HepG2 (cell line): ENCODE measurements at regions of chr17 and their contacts with region 1.

Region 1: DNA sequence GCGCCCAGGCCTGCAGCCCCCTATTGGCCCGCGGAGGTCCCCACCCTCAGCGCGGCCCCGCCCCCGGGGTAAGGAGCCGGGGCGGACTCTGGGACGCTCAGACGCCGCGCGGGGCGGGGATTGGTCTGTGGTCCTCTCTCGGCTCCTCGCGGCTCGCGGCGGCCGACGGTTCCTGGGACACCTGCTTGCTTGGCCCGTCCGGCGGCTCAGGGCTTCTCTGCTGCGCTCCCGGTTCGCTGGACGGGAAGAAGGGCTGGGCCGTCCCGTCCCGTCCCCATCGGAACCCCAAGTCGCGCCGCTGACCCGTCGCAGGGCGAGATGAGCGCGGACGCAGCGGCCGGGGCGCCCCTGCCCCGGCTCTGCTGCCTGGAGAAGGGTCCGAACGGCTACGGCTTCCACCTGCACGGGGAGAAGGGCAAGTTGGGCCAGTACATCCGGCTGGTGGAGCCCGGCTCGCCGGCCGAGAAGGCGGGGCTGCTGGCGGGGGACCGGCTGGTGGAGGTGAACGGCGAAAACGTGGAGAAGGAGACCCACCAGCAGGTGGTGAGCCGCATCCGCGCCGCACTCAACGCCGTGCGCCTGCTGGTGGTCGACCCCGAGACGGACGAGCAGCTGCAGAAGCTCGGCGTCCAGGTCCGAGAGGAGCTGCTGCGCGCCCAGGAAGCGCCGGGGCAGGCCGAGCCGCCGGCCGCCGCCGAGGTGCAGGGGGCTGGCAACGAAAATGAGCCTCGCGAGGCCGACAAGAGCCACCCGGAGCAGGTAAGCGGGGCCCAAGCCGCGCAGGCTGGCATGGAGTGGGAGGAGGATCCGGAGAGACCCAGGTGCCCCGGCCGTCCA is at the start of gene NHERF1:
- DNase-seq: peak; percentile 88
- ATAC-seq: peak; percentile 65
- H3K4me3 ChIP-seq: peak within 1 kb of the TSS; percentile 95 to 99 (median 99)
- H3K27ac ChIP-seq: peak within 1 kb of the TSS; percentile 96
- H3K4me1 ChIP-seq: peaks cover 70% of the 10 kb centered on the region
- H3K27me3 ChIP-seq: no peaks in the 10 kb centered on the region; a peak in 1 of 5 replicates
- CTCF ChIP-seq: peak; percentile 57
- EP300 ChIP-seq: 0 out of 4 replicates have a peak, but pooled peaks of 1 of the 2 experiments have one; percentile 22
- POLR2A ChIP-seq: peak; percentile 99 to 100
- RAD21 ChIP-seq: peak; percentile 68
- total RNA-seq, gene NHERF1: 138 and 169 TPM in 2 replicates

Region 2: GRCh38 chr17:74659898-74660297 is 88.8 kb before region 1 on chr17:
- CTCF ChIA-PET with region 1: interaction called, 12 read pairs
- POLR2A ChIA-PET with region 1: interaction called, 7 read pairs
- in situ Hi-C with region 1: no loop called
- intact Hi-C with region 1: no loop called
- DNase-seq: no peak
- ATAC-seq: no peak
- H3K4me3 ChIP-seq: no peak overlapping the region
- H3K27ac ChIP-seq: no peak overlapping the region
- H3K4me1 ChIP-seq: no peaks in the 10 kb centered on the region
- H3K27me3 ChIP-seq: peaks cover 0 to 20% of the 10 kb centered on the region in 2 experiments; a peak in 3 of 5 replicates
- CTCF ChIP-seq: no peak
- EP300 ChIP-seq: no peak
- POLR2A ChIP-seq: no peak
- RAD21 ChIP-seq: no peak

Region 3: GRCh38 chr17:74759243-74759801 is 10.6 kb after region 1 on chr17:
- CTCF ChIA-PET with region 1: interaction called, 4 read pairs
- POLR2A ChIA-PET with region 1: interaction called, 1,459 read pairs
- in situ Hi-C with region 1: no loop called
- intact Hi-C with region 1: loop called (anchors 1 kb)
- DNase-seq: no peak
- ATAC-seq: peak; percentile 4
- H3K4me3 ChIP-seq: peak overlapping the region in 1 of 3 experiments; percentile 19; a peak in 1 of 6 replicates
- H3K27ac ChIP-seq: peak overlapping the region; percentile 64
- H3K4me1 ChIP-seq: peaks cover 99% of the 10 kb centered on the region
- H3K27me3 ChIP-seq: no peaks in the 10 kb centered on the region
- CTCF ChIP-seq: peak; percentile 40
- EP300 ChIP-seq: no peak
- POLR2A ChIP-seq: no peak; a peak in 1 of 4 replicates
- RAD21 ChIP-seq: peak; percentile 59

Region 4: GRCh38 chr17:74776044-74776977 is 27.6 kb after region 1 on chr17 and contains the start of gene NAT9:
- CTCF ChIA-PET with region 1: interaction called, 219 read pairs
- POLR2A ChIA-PET with region 1: interaction called, 1,459 read pairs
- in situ Hi-C with region 1: loop called (anchors 5 kb)
- intact Hi-C with region 1: loop called (anchors 1 kb)
- DNase-seq: peak; percentile 94
- ATAC-seq: peak; percentile 74
- H3K4me3 ChIP-seq: peak within 1 kb of the TSS; percentile 83 to 95 (median 94)
- H3K27ac ChIP-seq: peak within 1 kb of the TSS; percentile 71
- H3K4me1 ChIP-seq: peaks cover 52% of the 10 kb centered on the region
- H3K27me3 ChIP-seq: no peaks in the 10 kb centered on the region; a peak in 1 of 5 replicates
- CTCF ChIP-seq: 0 out of 2 replicates have a peak, but pooled peaks have one; percentile 6
- EP300 ChIP-seq: 0 out of 4 replicates have a peak, but pooled peaks of 1 of the 2 experiments have one; percentile 43
- POLR2A ChIP-seq: peak; percentile 76 to 92
- RAD21 ChIP-seq: no peak; the same call in 1 of the 2 replicates
- total RNA-seq, gene NAT9: 37.6 and 44.2 TPM in 2 replicates

Region 5: GRCh38 chr17:74864866-74865395 is 116.2 kb after region 1 on chr17:
- CTCF ChIA-PET with region 1: interaction called, 5 read pairs
- POLR2A ChIA-PET with region 1: interaction called, 5 read pairs
- in situ Hi-C with region 1: no loop called
- intact Hi-C with region 1: loop called (anchors 2 kb)
- DNase-seq: peak; percentile 56
- ATAC-seq: peak; percentile 56
- H3K4me3 ChIP-seq: no peak overlapping the region
- H3K27ac ChIP-seq: no peak overlapping the region
- H3K4me1 ChIP-seq: peaks cover 58% of the 10 kb centered on the region
- H3K27me3 ChIP-seq: peaks cover 2 to 13% of the 10 kb centered on the region in 2 experiments; a peak in 3 of 5 replicates
- CTCF ChIP-seq: peak; percentile 98
- EP300 ChIP-seq: no peak
- POLR2A ChIP-seq: no peak
- RAD21 ChIP-seq: peak; percentile 81